ENCODE measurements at regions of chr22 and their contacts with region 1.

Region 1: GRCh38 chr22:34111210-34111824 is 191.0 kb upstream of the LARGE1 start:
- DNase-seq: peak; percentile 48
- H3K4me3 ChIP-seq: no peak overlapping the region; a peak in 1 of 4 replicates
- H3K27ac ChIP-seq: no peak overlapping the region
- H3K4me1 ChIP-seq: no peaks in the 10 kb centered on the region
- H3K27me3 ChIP-seq: no peaks in the 10 kb centered on the region
- CTCF ChIP-seq: peak; percentile 53
- EP300 ChIP-seq: no peak
- RAD21 ChIP-seq: peak; percentile 53

Region 2: GRCh38 chr22:33418484-33418883 is 692.8 kb before region 1 on chr22:
- CTCF ChIA-PET with region 1: no interaction called
- POLR2A ChIA-PET with region 1: no interaction called
- DNase-seq: no peak
- H3K4me3 ChIP-seq: no peak overlapping the region
- H3K27ac ChIP-seq: no peak overlapping the region
- H3K4me1 ChIP-seq: no peaks in the 10 kb centered on the region
- H3K27me3 ChIP-seq: no peaks in the 10 kb centered on the region
- CTCF ChIP-seq: no peak
- EP300 ChIP-seq: no peak
- RAD21 ChIP-seq: no peak

Region 3: GRCh38 chr22:34099287-34099686 is 12.0 kb before region 1 on chr22:
- CTCF ChIA-PET with region 1: interaction called, 11 read pairs
- POLR2A ChIA-PET with region 1: no interaction called
- DNase-seq: no peak
- H3K4me3 ChIP-seq: no peak overlapping the region
- H3K27ac ChIP-seq: no peak overlapping the region
- H3K4me1 ChIP-seq: no peaks in the 10 kb centered on the region
- H3K27me3 ChIP-seq: no peaks in the 10 kb centered on the region
- CTCF ChIP-seq: no peak
- EP300 ChIP-seq: no peak
- RAD21 ChIP-seq: no peak

Region 4: GRCh38 chr22:34122042-34122441 is 10.7 kb after region 1 on chr22:
- CTCF ChIA-PET with region 1: interaction called, 18 read pairs
- POLR2A ChIA-PET with region 1: no interaction called
- DNase-seq: no peak
- H3K4me3 ChIP-seq: no peak overlapping the region
- H3K27ac ChIP-seq: no peak overlapping the region
- H3K4me1 ChIP-seq: no peaks in the 10 kb centered on the region
- H3K27me3 ChIP-seq: no peaks in the 10 kb centered on the region
- CTCF ChIP-seq: no peak
- EP300 ChIP-seq: no peak
- RAD21 ChIP-seq: no peak

Measured in SK-N-SH (cell line).